ENCODE measurements at regions of chr20 and their contacts with region 1.

Region 1: DNA sequence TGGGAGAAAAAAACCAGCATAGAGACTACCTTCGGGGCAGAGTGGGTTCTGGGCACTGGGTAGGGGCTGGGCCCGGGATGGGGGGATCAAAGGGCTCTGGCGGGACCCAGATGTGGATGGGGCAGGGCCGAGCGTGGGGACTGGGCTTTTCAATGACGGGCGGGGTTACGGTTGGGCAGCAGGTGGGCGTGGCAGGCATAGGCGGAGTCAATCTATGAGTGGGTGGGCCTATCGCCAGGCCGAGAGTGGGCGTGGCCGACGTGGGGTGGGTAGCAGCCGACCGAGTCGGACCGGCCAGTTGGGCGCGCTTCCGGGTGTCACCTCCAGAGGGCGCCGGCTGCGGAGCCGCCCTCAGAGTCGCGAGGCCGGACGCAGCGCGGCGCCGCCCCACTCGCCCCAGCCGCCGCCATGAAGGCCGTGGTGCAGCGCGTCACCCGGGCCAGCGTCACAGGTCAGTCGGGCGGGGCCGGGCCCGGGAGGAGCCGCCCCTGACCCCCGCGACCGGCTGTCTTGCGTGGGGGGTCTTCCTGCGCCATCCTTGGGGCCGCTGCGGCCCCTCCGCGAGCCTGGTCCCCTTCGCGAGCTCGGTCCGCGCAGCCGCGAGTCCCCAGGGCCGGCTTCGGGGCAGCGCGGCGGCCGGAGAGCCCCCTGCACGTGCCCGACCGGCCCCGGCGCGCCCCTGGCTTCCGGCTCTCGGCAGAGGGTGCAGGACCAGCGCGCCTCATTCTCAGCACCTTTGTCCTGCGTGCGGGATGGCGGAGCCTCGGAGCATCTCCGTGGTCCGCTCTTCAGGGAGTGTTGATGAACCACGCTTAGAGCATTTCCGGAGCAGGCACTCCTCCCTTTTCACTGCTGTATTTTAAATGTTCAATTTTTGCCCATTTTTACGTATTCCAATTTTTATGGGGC is at the start of gene DTD1:
- DNase-seq: peak; percentile 29
- H3K4me3 ChIP-seq: peak within 1 kb of the TSS; percentile 63
- H3K27me3 ChIP-seq: no peaks in the 10 kb centered on the region
- CTCF ChIP-seq: peak; percentile 61
- polyA plus RNA-seq, gene DTD1: 47.3 and 57.7 TPM in 2 replicates

Region 2: GRCh38 chr20:18566892-18567742 is 20.8 kb before region 1 on chr20 and contains the start of gene SMIM26:
- CTCF ChIA-PET with region 1: no interaction called
- POLR2A ChIA-PET with region 1: interaction called, 10 read pairs
- DNase-seq: peak; percentile 42
- H3K4me3 ChIP-seq: peak within 1 kb of the TSS; percentile 52
- H3K27me3 ChIP-seq: no peaks in the 10 kb centered on the region
- CTCF ChIP-seq: no peak
- polyA plus RNA-seq, gene SMIM26: 108 and 232 TPM in 2 replicates

Measured in BJ (cell line).